ENCODE measurements at regions of chr2 and their contacts with region 1.

Region 1: DNA sequence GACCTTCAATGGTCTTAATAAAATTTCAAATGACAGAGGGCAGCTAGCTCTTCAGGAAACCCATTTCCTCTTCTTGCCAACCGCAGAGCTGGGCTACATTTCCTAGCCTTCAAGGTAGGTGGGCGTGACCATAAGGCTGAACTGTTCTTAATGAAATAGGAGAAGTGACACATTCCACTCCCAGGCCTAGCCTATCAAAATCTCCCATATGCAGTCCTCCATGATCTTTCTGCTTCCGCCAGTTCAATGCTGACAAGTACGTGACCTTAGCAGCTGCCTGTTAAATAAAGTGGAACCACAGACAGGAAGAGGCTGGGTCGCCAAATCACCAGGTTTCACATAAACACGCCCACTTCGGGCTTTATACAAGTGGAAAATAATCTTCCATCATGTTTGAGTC is 13.2 kb downstream of the SERPINE2 start:
- DNase-seq: peak; percentile 90
- H3K4me3 Mint-ChIP-seq: peak overlapping the region; percentile 46
- H3K27ac Mint-ChIP-seq: peak overlapping the region; percentile 95
- H3K4me1 Mint-ChIP-seq: peaks cover 64% of the 10 kb centered on the region
- H3K27me3 Mint-ChIP-seq: no peaks in the 10 kb centered on the region

Region 2: DNA sequence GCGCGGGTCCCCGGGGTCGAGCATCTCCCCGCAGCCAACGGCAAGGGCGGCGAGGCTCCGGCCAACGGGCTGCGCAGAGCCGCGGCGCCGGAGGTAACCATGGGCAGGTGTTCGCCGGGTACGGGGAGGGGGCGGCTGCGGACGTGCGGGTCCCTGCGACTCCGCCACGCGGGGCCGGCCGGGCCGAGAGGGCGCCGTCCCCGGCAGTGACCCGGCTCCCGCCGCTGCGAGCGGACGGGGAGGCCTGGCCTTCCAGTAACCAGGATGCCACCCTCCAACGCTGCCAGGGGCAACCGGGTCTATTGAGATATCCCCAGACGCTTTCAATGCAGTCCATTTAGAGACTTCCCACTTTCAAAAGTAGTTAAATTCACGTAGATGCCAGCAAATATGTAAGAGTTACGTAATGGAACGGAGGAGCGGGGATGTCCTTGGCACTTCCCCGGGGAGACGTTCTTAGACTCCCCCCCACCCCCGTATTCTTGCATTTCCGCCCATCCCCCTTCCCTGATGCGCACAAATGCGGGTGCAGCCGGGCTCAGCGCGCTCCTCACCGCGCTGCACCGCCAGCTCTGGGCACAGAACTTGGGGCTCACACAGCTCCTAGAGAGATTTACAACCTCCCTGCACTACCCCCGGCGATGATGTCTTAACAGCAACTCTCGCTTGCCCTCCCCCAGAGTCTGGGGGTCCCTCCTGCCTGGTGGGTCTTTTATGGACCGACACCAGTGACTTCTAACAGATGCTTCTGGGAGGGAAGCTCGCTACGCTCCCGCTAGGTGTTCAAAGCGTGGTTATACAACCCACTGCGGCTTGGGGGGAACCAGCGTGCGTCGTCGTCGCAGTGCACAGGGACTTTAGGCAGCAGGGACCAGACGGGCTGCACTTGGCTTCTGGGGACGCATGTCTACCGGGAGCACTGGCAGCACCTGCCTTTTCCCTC is 1600.9 kb before region 1 on chr2:
- intact Hi-C with region 1: loop called (anchors 10 kb)
- DNase-seq: peak; percentile 76
- H3K4me3 Mint-ChIP-seq: peak overlapping the region; percentile 84
- H3K27ac Mint-ChIP-seq: peak overlapping the region; percentile 84
- H3K4me1 Mint-ChIP-seq: peaks cover 48% of the 10 kb centered on the region
- H3K27me3 Mint-ChIP-seq: peaks cover 24% of the 10 kb centered on the region

Region 3: GRCh38 chr2:223944703-223945531 is 81.0 kb before region 1 on chr2 and contains the start of gene WDFY1:
- intact Hi-C with region 1: no loop called
- DNase-seq: peak; percentile 94
- H3K4me3 Mint-ChIP-seq: peak within 1 kb of the TSS; percentile 91
- H3K27ac Mint-ChIP-seq: peak within 1 kb of the TSS; percentile 94
- H3K4me1 Mint-ChIP-seq: peaks cover 54% of the 10 kb centered on the region
- H3K27me3 Mint-ChIP-seq: no peaks in the 10 kb centered on the region
- total RNA-seq, gene WDFY1: 25.3 and 27.8 TPM in 2 replicates

Region 4: DNA sequence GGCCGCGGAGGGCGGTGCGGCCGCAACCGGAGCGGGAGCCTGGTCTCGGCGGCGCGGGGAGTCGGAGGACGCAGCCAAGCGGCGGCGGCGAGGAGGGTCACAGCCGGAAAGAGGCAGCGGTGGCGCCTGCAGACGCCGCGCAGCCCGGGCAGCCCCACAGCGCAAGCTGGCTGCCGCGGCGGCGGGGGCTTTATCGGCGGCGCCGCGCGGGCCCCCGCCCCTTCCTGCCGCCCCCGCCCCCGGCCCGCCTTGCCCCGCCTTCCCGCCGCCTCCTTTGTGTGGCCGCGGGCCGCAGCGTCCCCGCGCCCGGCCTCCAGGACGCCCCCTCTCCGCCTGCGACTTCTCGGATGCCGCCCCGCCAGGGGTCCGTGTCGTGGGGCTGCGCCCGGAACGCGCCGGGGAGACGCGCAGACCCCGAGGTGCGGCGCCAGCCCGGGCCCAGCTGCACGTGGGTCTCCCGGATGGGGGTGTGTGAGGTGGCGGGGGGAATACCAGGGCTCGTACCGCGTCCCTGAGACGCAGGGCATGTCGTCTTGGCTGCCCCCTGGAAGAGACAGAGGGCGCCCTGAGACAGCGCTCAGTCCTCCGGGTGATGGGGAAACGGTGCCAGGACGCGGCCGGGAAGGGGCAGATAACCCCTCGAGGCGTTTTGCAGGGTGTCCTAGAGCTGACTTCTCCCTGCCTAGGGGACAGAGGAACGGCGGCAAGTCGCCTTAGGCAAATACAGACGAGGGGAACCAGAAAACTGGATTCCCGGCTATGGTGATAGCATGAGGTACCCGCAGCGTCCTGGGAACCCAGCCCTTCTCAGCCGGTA is 13.5 kb after region 1 on chr2 and contains the start of gene SERPINE2:
- intact Hi-C with region 1: loop called (anchors 1 kb)
- DNase-seq: peak; percentile 87
- H3K4me3 Mint-ChIP-seq: peak within 1 kb of the TSS; percentile 97
- H3K27ac Mint-ChIP-seq: peak within 1 kb of the TSS; percentile 49
- H3K4me1 Mint-ChIP-seq: peaks cover 23% of the 10 kb centered on the region
- H3K27me3 Mint-ChIP-seq: peaks cover 49% of the 10 kb centered on the region
- total RNA-seq, gene SERPINE2: 23.2 and 23.9 TPM in 2 replicates

Measured in activated CD4-positive, alpha-beta T cell treated with anti-CD3 and anti-CD28 coated beads, Interleukin-2, amount 10 ng/mL, durations not matched to agents 24 days and 14 days (primary cell).